HepG2 (cell line): ENCODE measurements at regions of chr3 and their contacts with region 1.

Region 1: GRCh38 chr3:158727206-158728060 is 4.8 kb downstream of the RARRES1 start:
- DNase-seq: peak; percentile 44
- ATAC-seq: peak; percentile 72
- H3K4me3 ChIP-seq: no peak overlapping the region; a peak in 1 of 6 replicates
- H3K27ac ChIP-seq: no peak overlapping the region
- H3K4me1 ChIP-seq: peaks cover 30% of the 10 kb centered on the region
- H3K27me3 ChIP-seq: no peaks in the 10 kb centered on the region
- CTCF ChIP-seq: peak; percentile 74
- EP300 ChIP-seq: no peak
- POLR2A ChIP-seq: no peak
- RAD21 ChIP-seq: 0 out of 2 replicates have a peak, but pooled peaks have one; percentile 44

Region 2: GRCh38 chr3:158548691-158549090 is 178.7 kb before region 1 on chr3:
- CTCF ChIA-PET with region 1: no interaction called
- POLR2A ChIA-PET with region 1: no interaction called
- in situ Hi-C with region 1: no loop called
- intact Hi-C with region 1: no loop called
- DNase-seq: no peak
- ATAC-seq: no peak
- H3K4me3 ChIP-seq: no peak overlapping the region
- H3K27ac ChIP-seq: no peak overlapping the region
- H3K4me1 ChIP-seq: peaks cover 7% of the 10 kb centered on the region
- H3K27me3 ChIP-seq: no peaks in the 10 kb centered on the region
- CTCF ChIP-seq: no peak
- EP300 ChIP-seq: no peak
- POLR2A ChIP-seq: no peak
- RAD21 ChIP-seq: no peak

Region 3: GRCh38 chr3:158768361-158768787 is 40.9 kb after region 1 on chr3:
- CTCF ChIA-PET with region 1: no interaction called
- POLR2A ChIA-PET with region 1: no interaction called
- in situ Hi-C with region 1: no loop called
- intact Hi-C with region 1: loop called (anchors 5 kb)
- DNase-seq: peak; percentile 67
- ATAC-seq: peak; percentile 91
- H3K4me3 ChIP-seq: peak overlapping the region; percentile 44 to 64 (median 55); a peak in 5 of 6 replicates
- H3K27ac ChIP-seq: peak overlapping the region; percentile 58
- H3K4me1 ChIP-seq: peaks cover 50% of the 10 kb centered on the region
- H3K27me3 ChIP-seq: no peaks in the 10 kb centered on the region
- CTCF ChIP-seq: no peak
- EP300 ChIP-seq: no peak
- POLR2A ChIP-seq: no peak
- RAD21 ChIP-seq: no peak